ENCODE measurements at regions of chr9 and their contacts with region 1.

Region 1: GRCh38 chr9:105127863-105128220 is 116.6 kb upstream of the SLC44A1 start:
- DNase-seq: peak; percentile 25 to 89 (median 58)
- ATAC-seq: peak; percentile 99
- H3K4me3 ChIP-seq: peak overlapping the region in 1 of 2 experiments; percentile 6
- H3K4me3 Mint-ChIP-seq: peak overlapping the region; percentile 56
- H3K27ac ChIP-seq: no peak overlapping the region
- H3K27ac Mint-ChIP-seq: peak overlapping the region; percentile 46
- H3K4me1 ChIP-seq: peaks cover 40% of the 10 kb centered on the region
- H3K4me1 Mint-ChIP-seq: peaks cover 48% of the 10 kb centered on the region
- H3K27me3 ChIP-seq: no peaks in the 10 kb centered on the region
- H3K27me3 Mint-ChIP-seq: peaks cover 2% of the 10 kb centered on the region
- CTCF ChIP-seq: peak; percentile 23

Region 2: GRCh38 chr9:104927912-104928740 is 199.7 kb before region 1 on chr9 and contains the start of gene ABCA1:
- CTCF ChIA-PET with region 1: no interaction called
- POLR2A ChIA-PET with region 1: no interaction called
- intact Hi-C with region 1: loop called in 1 of 2 experiments (anchors 5 kb)
- DNase-seq: peak; percentile 42 to 87 (median 65)
- ATAC-seq: peak; percentile 78
- H3K4me3 ChIP-seq: peak within 1 kb of the TSS; percentile 56 to 71
- H3K4me3 Mint-ChIP-seq: peak within 1 kb of the TSS; percentile 91
- H3K27ac ChIP-seq: no peak within 1 kb of the TSS
- H3K27ac Mint-ChIP-seq: peak within 1 kb of the TSS; percentile 80
- H3K4me1 ChIP-seq: peaks cover 19% of the 10 kb centered on the region
- H3K4me1 Mint-ChIP-seq: peaks cover 15% of the 10 kb centered on the region
- H3K27me3 ChIP-seq: peaks cover 0 to 24% of the 10 kb centered on the region in 2 experiments
- H3K27me3 Mint-ChIP-seq: peaks cover 11% of the 10 kb centered on the region
- CTCF ChIP-seq: no peak
- total RNA-seq, gene ABCA1: 11.2 to 11.4 TPM

Region 3: GRCh38 chr9:104968025-104968982 is 159.5 kb before region 1 on chr9:
- CTCF ChIA-PET with region 1: no interaction called
- POLR2A ChIA-PET with region 1: no interaction called
- intact Hi-C with region 1: loop called (anchors 2 to 5 kb)
- DNase-seq: peak; percentile 77 to 91 (median 88)
- ATAC-seq: peak; percentile 98
- H3K4me3 ChIP-seq: peak overlapping the region; percentile 80 to 86
- H3K4me3 Mint-ChIP-seq: peak overlapping the region; percentile 91
- H3K27ac ChIP-seq: peak overlapping the region; percentile 11 to 47
- H3K27ac Mint-ChIP-seq: peak overlapping the region; percentile 73
- H3K4me1 ChIP-seq: peaks cover 14% of the 10 kb centered on the region
- H3K4me1 Mint-ChIP-seq: peaks cover 13% of the 10 kb centered on the region
- H3K27me3 ChIP-seq: peaks cover 0 to 4% of the 10 kb centered on the region in 2 experiments
- H3K27me3 Mint-ChIP-seq: peaks cover 5% of the 10 kb centered on the region
- CTCF ChIP-seq: no peak

Region 4: GRCh38 chr9:105103782-105104181 is 24.1 kb before region 1 on chr9:
- CTCF ChIA-PET with region 1: no interaction called
- POLR2A ChIA-PET with region 1: no interaction called
- intact Hi-C with region 1: no loop called
- DNase-seq: no peak
- ATAC-seq: no peak
- H3K4me3 ChIP-seq: no peak overlapping the region
- H3K4me3 Mint-ChIP-seq: no peak overlapping the region
- H3K27ac ChIP-seq: no peak overlapping the region
- H3K27ac Mint-ChIP-seq: no peak overlapping the region
- H3K4me1 ChIP-seq: no peaks in the 10 kb centered on the region
- H3K4me1 Mint-ChIP-seq: no peaks in the 10 kb centered on the region
- H3K27me3 ChIP-seq: no peaks in the 10 kb centered on the region
- H3K27me3 Mint-ChIP-seq: peaks cover 4% of the 10 kb centered on the region
- CTCF ChIP-seq: no peak

Region 5: GRCh38 chr9:105114964-105115728 is 12.7 kb before region 1 on chr9:
- CTCF ChIA-PET with region 1: interaction called, 5 read pairs
- POLR2A ChIA-PET with region 1: interaction called, 18 read pairs
- intact Hi-C with region 1: no loop called
- DNase-seq: peak in 6 of 9 experiments; percentile 9 to 58 (median 30)
- ATAC-seq: peak; percentile 40
- H3K4me3 ChIP-seq: no peak overlapping the region
- H3K4me3 Mint-ChIP-seq: peak overlapping the region; percentile 57
- H3K27ac ChIP-seq: no peak overlapping the region
- H3K27ac Mint-ChIP-seq: no peak overlapping the region
- H3K4me1 ChIP-seq: peaks cover 24% of the 10 kb centered on the region
- H3K4me1 Mint-ChIP-seq: peaks cover 32% of the 10 kb centered on the region
- H3K27me3 ChIP-seq: no peaks in the 10 kb centered on the region
- H3K27me3 Mint-ChIP-seq: peaks cover under 1% of the 10 kb centered on the region
- CTCF ChIP-seq: no peak

Region 6: GRCh38 chr9:105157130-105157583 is 29.3 kb after region 1 on chr9:
- CTCF ChIA-PET with region 1: no interaction called
- POLR2A ChIA-PET with region 1: no interaction called
- intact Hi-C with region 1: loop called (anchors 2 kb)
- DNase-seq: peak in 5 of 9 experiments; percentile 1 to 58 (median 41)
- ATAC-seq: peak; percentile 55
- H3K4me3 ChIP-seq: no peak overlapping the region
- H3K4me3 Mint-ChIP-seq: no peak overlapping the region
- H3K27ac ChIP-seq: no peak overlapping the region
- H3K27ac Mint-ChIP-seq: no peak overlapping the region
- H3K4me1 ChIP-seq: peaks cover 5% of the 10 kb centered on the region
- H3K4me1 Mint-ChIP-seq: peaks cover 16% of the 10 kb centered on the region
- H3K27me3 ChIP-seq: peaks cover 0 to 3% of the 10 kb centered on the region in 2 experiments
- H3K27me3 Mint-ChIP-seq: no peaks in the 10 kb centered on the region
- CTCF ChIP-seq: peak; percentile 57

Region 7: DNA sequence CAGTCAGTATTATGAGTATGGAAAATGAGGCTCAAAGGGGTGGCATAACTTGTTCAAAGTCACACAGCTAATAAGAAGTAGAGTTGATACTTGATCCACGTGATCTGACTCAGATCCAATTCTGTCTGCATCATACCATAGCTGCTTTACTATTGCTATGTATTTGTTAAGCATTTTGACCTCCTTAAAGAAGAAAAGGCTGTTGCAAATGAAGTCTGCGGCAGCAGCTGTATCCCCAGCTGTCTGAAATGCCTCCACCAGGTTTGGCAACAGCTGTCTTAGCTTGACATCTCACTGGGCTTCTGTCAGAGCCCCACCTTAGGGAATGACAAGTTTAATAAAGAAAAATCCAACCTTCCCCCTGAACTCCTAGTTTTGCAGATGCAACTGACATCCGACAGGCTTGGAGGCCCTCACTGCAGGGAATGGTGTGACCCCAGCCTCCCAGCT is 41.1 kb after region 1 on chr9:
- CTCF ChIA-PET with region 1: no interaction called
- POLR2A ChIA-PET with region 1: no interaction called
- intact Hi-C with region 1: loop called in 1 of 2 experiments (anchors 1 kb)
- DNase-seq: no peak
- ATAC-seq: no peak
- H3K4me3 ChIP-seq: no peak overlapping the region
- H3K4me3 Mint-ChIP-seq: no peak overlapping the region
- H3K27ac ChIP-seq: no peak overlapping the region
- H3K27ac Mint-ChIP-seq: no peak overlapping the region
- H3K4me1 ChIP-seq: no peaks in the 10 kb centered on the region
- H3K4me1 Mint-ChIP-seq: no peaks in the 10 kb centered on the region
- H3K27me3 ChIP-seq: no peaks in the 10 kb centered on the region
- H3K27me3 Mint-ChIP-seq: peaks cover 9% of the 10 kb centered on the region
- CTCF ChIP-seq: no peak

Region 8: DNA sequence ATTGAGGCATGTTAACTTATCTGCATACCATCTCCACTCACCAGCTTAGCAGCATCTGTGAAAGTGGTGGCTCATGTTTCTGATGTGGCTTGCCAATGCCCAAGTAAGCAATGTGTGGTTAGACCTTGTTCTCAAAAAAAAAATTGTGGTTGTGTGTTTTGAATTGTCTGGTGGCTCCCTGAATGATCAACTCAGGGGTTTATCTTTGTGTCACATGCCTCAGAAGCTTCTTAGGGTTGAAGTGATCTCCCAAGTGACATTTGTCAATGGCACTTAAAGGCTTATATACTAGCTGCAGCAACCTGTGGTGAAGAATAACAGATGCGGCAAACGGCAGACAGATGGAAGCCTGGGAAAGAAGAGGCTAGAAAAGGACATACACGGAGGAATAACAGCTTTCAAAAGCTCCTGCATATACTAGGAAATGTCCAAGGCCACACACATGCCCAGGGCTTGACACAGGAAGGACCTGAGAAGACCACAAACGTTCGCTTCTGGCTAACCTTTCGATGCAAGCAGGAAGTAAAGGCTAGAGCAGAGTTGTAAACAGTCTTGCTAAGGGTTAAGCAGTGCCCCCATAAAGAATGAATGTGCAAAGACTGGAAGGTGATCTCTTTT is 277.8 kb after region 1 on chr9:
- CTCF ChIA-PET with region 1: interaction called, 3 read pairs
- POLR2A ChIA-PET with region 1: no interaction called
- intact Hi-C with region 1: loop called in 1 of 2 experiments (anchors 10 kb)
- DNase-seq: peak; percentile 25 to 90 (median 57)
- ATAC-seq: peak; percentile 89
- H3K4me3 ChIP-seq: peak overlapping the region; percentile 3 to 12
- H3K4me3 Mint-ChIP-seq: peak overlapping the region; percentile 63
- H3K27ac ChIP-seq: no peak overlapping the region
- H3K27ac Mint-ChIP-seq: peak overlapping the region; percentile 74
- H3K4me1 ChIP-seq: peaks cover 23% of the 10 kb centered on the region
- H3K4me1 Mint-ChIP-seq: peaks cover 30% of the 10 kb centered on the region
- H3K27me3 ChIP-seq: peaks cover 17 to 30% of the 10 kb centered on the region in 2 experiments
- H3K27me3 Mint-ChIP-seq: peaks cover 48% of the 10 kb centered on the region
- CTCF ChIP-seq: no peak

Measured in CD8-positive, alpha-beta T cell (primary cell).